GM10248 (cell line): ENCODE measurements at regions of chr5 and their contacts with region 1.

Region 1: DNA sequence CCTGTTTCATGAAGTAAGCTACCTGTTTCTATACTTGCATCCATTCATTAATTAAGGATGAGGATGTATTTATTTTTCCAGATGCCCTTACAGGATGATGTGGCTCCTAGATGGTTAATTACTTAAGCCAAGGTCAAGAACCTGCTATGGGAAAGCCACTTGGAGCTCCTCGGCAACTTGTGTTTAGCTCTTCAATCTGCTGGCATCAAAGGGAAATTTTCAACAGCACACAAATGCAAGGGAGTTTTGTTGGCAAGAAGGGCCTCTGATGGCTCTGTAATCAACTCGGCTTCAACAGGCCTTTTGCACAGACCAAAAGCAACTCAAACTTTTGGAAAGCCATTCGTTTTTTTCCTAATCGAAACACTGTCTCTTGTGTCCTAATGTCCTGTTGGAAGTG is 125.3 kb downstream of the EFNA5 start:
- DNase-seq: no peak
- CTCF ChIP-seq: no peak

Region 2: DNA sequence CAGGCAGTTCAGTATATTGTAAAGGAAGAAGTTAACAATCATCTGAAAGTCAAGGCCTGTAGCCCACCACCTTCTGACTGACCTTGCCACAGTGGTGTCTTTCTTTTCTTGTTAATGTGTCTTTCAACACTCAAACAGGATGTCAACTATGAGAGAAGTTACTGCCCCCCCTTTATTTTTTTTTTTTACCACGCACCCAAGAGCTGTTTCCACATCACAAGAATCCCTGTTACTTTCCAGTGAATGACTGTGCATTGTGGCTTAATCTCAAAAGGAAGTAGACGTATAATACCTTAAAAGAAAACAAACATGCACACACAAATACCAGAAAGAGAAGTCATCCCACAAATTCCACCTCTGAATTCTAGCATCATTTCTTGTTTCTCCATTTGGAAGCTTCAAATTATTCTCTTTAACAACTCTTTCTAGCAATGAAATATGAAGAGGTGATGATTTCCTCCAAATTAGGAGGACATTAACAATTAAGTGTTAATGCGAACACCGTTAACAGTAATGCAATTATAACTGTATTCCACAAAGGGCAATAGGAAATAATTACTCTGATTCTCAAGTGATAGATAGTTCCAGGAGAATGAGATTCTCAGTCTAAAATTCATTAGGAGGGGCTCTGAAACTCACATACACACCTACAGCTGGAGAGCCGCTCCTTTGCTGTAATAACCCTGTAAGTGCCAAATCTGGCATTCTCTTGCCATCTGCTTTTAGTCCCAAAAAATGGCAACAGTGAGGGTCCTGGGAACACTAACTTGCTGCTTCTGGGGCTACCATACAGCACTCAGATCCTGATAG is 75.8 kb before region 1 on chr5:
- CTCF ChIA-PET with region 1: no interaction called
- POLR2A ChIA-PET with region 1: no interaction called
- DNase-seq: no peak
- CTCF ChIP-seq: no peak

Region 3: DNA sequence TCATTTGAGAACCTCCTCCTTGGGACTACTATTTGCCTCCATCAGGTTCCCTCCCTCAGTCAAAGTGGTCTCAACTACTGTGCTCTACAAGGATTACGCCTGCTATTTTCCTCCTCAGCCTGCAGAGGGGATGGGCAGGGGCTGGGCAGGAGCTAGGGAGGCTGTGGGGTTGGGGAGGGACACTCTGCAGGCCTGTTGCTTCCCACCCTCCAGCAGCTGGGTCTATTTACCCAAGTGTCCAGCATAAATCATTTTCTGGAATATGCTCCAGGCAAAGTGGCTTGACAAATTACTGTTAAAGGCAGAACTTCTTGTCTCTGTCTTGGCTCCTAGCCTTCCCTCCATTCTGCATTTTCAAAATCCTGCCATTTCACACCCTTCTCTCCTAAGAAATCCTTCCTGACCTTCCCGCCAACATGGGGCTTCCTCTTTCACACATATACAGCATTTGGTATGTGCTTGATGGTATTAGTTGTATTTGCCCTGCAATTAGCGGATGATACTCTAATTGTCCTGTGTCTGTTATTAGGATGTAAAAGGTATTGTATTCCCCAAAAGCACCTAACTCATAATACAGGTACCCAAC is 18.6 kb after region 1 on chr5:
- CTCF ChIA-PET with region 1: interaction called, 55 read pairs
- POLR2A ChIA-PET with region 1: no interaction called
- DNase-seq: no peak
- CTCF ChIP-seq: no peak